Activated B cell treated with CpG ODN at 0.5 μM for 24 hours (primary cell): ENCODE measurements at regions of chr12 and their contacts with region 1.

Region 1: DNA sequence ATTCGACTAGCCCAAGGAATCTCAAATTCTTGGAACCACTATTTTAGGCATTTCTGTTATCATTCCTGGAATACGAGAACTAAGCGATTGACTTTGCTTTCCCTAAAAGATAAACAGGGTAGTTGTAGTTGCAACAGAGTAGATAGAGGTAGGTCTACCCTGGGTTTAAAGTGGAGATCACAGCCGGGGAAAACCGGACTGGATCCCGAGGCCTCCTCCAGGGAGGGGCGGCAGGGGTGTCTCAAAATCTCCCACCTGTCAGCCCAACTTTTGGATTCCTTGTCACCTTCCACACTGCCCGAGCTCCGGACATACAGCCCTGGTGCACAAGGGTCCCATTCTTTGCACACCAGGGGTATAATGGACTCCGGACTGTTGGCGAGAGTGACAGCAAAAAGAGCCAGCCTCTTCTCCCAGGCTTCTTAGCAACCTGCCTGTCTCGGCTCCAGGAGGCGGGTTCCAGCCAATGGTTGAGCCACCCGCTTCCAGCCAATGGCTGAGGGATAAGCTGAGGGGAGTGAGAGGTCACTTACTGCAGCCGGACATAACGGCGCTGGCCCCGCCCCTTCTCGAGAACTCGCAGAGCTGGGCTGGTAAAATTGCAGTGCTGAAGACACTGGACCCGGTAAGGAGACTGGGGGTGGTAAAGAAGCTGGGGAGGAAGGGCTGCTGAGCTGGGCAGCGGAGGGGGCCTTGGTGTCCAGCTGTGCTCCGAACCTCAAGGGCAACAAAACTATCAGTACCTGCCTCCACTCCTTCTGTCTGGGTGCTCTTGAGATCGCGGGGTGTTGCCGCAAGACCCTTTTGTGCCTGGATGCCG is at the start of gene SUOX:
- DNase-seq: no peak
- ATAC-seq: peak; percentile 75
- H3K4me3 Mint-ChIP-seq: peak within 1 kb of the TSS; percentile 78
- H3K27ac Mint-ChIP-seq: peak within 1 kb of the TSS; percentile 18
- H3K4me1 Mint-ChIP-seq: peaks cover 21% of the 10 kb centered on the region
- H3K27me3 Mint-ChIP-seq: no peaks in the 10 kb centered on the region
- CTCF ChIP-seq: no peak
- total RNA-seq, gene SUOX: 5.4 and 5.6 TPM in 2 replicates

Region 2: DNA sequence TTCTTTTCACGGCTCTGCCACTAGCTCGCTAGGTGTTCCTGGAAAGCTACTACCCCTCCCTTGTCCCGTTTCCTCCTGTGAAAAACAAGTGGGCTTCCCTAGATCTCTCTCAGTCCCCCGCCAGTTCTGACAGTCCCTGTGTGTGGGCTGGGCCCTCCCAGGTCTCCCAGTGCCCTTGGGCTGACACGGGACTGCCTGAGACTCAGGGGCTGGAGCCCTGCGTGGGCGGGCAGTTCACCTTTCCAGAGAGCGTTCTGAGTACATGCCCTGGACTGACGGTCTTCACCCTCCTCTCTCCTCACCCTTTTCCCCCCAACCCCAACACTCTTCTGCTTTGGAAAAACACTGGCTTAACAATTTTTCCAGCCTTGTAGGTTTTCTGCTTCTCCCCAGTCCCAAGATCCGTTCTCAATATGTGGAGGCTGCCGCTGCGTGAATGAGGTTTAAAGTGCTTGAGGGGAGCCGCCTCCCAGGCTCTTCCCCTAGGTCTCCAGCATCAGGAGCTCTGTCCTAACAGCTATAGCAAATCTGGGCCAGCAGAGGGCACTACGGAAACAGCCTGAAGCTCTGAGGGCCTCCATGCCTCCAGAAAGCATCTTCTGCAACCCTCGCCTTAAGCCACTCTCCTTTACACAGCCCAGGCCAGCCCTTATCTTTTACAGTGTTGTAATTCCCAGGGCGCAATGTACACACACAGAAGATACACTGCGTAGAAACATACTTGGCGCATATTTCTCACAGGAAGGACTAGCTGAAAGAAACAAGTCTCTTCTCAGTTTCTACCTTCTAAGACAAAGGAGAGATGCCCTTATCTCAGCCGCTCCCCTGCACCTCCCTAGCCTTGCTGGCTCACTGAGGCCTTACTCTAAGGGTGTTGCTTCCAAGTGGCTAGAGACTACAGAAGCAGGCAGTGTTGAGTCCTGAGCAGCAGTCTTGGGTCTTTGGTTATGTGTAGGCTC is 1338.3 kb before region 1 on chr12:
- CTCF ChIA-PET with region 1: no interaction called
- POLR2A ChIA-PET with region 1: no interaction called
- intact Hi-C with region 1: no loop called
- DNase-seq: no peak
- ATAC-seq: no peak
- H3K4me3 Mint-ChIP-seq: no peak overlapping the region
- H3K27ac Mint-ChIP-seq: no peak overlapping the region
- H3K4me1 Mint-ChIP-seq: no peaks in the 10 kb centered on the region
- H3K27me3 Mint-ChIP-seq: peaks cover 9% of the 10 kb centered on the region
- CTCF ChIP-seq: no peak

Region 3: GRCh38 chr12:55973598-55974307 is 23.2 kb before region 1 on chr12 and contains the start of gene RAB5B:
- CTCF ChIA-PET with region 1: interaction called, 7 read pairs
- POLR2A ChIA-PET with region 1: interaction called, 14 read pairs
- intact Hi-C with region 1: no loop called
- DNase-seq: peak; percentile 83
- ATAC-seq: peak; percentile 87
- H3K4me3 Mint-ChIP-seq: no peak within 1 kb of the TSS
- H3K27ac Mint-ChIP-seq: no peak within 1 kb of the TSS
- H3K4me1 Mint-ChIP-seq: peaks cover 27% of the 10 kb centered on the region
- H3K27me3 Mint-ChIP-seq: no peaks in the 10 kb centered on the region
- CTCF ChIP-seq: no peak
- total RNA-seq, gene RAB5B: 82.1 and 83.8 TPM in 2 replicates

Region 4: DNA sequence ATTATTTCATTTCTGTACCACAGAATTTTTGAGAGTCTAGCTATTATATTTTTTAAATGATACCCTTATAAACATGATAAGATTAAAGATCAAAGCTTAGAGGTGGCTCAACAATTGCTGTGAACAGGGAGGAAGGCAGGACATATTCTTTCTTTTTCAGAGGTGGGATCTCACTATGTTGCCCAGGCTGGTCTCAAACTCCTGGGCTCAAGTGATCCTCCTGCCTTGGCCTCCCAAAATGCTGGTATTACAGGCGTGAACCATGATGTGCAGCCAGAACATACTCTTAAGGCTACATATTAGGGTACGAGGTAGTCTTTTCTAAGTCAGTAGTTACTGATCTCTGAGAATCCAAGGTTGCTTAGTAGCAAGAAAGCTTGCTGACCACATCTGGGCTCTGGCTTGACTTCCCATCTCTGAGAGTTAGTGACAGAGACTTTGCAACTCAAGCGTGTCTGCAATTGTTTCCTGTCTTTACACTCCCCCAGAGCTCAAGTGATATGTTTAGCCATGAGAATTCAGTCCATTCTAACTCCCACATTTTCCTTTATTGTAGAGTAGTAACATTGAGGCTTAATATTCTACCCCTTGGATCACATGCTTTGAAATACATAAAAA is 14.5 kb before region 1 on chr12:
- CTCF ChIA-PET with region 1: interaction called, 18 read pairs
- POLR2A ChIA-PET with region 1: interaction called, 18 read pairs
- intact Hi-C with region 1: no loop called
- DNase-seq: no peak
- ATAC-seq: peak; percentile 78
- H3K4me3 Mint-ChIP-seq: no peak overlapping the region
- H3K27ac Mint-ChIP-seq: no peak overlapping the region
- H3K4me1 Mint-ChIP-seq: peaks cover 32% of the 10 kb centered on the region
- H3K27me3 Mint-ChIP-seq: no peaks in the 10 kb centered on the region
- CTCF ChIP-seq: no peak

Region 5: DNA sequence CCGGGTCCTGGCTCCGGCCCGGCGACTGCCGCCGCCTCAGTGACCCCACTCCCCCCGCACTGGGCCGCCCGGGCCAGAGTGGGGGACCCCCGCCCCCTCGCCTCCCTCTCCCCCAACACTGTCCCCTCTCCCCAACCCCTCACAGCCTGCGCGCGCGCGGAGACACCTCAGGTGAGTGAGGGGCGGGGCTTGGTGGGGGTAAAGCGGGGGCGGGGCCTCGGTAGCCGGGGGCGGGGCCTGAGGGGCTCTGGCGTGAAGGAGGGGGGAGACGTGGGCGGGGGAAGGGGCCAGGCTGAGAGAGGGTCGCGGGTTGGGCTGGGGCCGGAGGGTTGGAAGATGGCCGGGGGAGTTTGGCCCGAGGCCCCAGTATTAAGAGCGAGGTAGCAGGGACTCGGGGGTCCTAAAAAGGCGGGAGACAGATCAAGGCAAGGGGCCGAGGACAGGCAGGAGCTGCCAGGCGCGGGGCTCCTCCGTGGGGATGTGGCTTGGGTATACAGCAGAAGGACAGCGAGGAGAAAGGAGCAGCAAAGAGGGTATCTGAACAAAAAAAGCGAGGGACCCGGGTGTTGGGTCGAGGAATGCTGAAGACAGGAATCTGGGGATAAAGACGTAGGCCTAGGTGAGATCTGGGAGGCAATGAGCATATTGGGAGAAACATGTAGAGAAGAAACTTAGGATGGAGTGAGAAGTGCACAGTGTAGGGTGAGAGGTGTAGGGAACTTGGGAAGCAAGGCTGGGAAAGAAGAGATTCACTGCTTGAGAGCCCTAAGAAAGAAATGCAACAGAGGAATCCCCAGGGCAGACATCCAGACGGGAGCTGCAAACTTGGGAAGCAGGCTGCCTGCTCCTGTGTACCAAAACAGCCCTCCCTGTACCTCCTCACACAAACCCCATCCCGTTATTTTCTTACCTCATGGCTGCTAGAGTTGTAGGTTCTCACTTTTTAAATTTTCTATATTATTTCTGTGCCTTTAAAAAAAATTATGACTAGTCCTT is 10.9 kb after region 1 on chr12:
- CTCF ChIA-PET with region 1: interaction called, 19 read pairs
- POLR2A ChIA-PET with region 1: interaction called, 13 read pairs
- intact Hi-C with region 1: loop called (anchors 1 kb)
- DNase-seq: peak; percentile 71
- ATAC-seq: peak; percentile 92
- H3K4me3 Mint-ChIP-seq: peak overlapping the region; percentile 88
- H3K27ac Mint-ChIP-seq: peak overlapping the region; percentile 79
- H3K4me1 Mint-ChIP-seq: peaks cover 9% of the 10 kb centered on the region
- H3K27me3 Mint-ChIP-seq: no peaks in the 10 kb centered on the region
- CTCF ChIP-seq: no peak

Region 6: GRCh38 chr12:56029666-56030293 is 32.9 kb after region 1 on chr12:
- CTCF ChIA-PET with region 1: interaction called, 26 read pairs
- POLR2A ChIA-PET with region 1: no interaction called
- intact Hi-C with region 1: loop called (anchors 1 kb)
- DNase-seq: no peak
- ATAC-seq: peak; percentile 71
- H3K4me3 Mint-ChIP-seq: no peak overlapping the region
- H3K27ac Mint-ChIP-seq: no peak overlapping the region
- H3K4me1 Mint-ChIP-seq: no peaks in the 10 kb centered on the region
- H3K27me3 Mint-ChIP-seq: no peaks in the 10 kb centered on the region
- CTCF ChIP-seq: no peak

Region 7: GRCh38 chr12:56178347-56178746 is 181.4 kb after region 1 on chr12:
- CTCF ChIA-PET with region 1: no interaction called
- POLR2A ChIA-PET with region 1: no interaction called
- intact Hi-C with region 1: no loop called
- DNase-seq: no peak
- ATAC-seq: no peak
- H3K4me3 Mint-ChIP-seq: no peak overlapping the region
- H3K27ac Mint-ChIP-seq: no peak overlapping the region
- H3K4me1 Mint-ChIP-seq: no peaks in the 10 kb centered on the region
- H3K27me3 Mint-ChIP-seq: no peaks in the 10 kb centered on the region
- CTCF ChIP-seq: no peak